MCF 10A (cell line): ENCODE measurements at regions of chr3 and their contacts with region 1.

Region 1: DNA sequence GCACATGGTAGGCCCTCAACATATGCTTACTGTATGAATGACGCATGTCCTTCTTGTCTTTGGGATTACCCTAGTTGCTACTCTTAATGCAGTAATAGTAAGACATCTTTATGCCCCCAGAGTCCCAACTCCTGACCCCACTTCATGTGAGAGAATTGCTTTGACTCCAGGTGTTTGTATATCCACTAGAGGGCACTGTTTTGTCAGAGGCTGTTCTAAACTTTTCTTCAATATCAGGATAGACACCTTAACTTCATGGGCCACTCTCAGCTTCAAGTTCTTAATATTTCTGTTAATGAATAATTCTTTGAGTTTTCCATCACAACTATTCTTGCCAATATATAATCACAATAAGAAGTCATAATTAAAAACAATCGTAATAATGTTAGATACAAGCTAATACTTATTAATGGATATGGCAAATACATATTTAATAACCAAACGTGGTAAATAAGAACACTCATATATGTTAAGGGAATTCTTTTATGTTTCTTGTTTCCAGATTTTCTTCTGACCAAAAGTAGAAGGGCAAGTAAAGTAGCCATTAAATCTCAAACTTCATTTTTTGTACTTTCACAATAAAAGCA is 337.2 kb upstream of the DNAJC19 start:
- DNase-seq: peak; percentile 46
- H3K4me3 Mint-ChIP-seq: no peak overlapping the region
- H3K27ac Mint-ChIP-seq: no peak overlapping the region
- H3K4me1 Mint-ChIP-seq: no peaks in the 10 kb centered on the region
- H3K27me3 Mint-ChIP-seq: peaks cover 18% of the 10 kb centered on the region
- CTCF ChIP-seq: peak; percentile 66

Region 2: DNA sequence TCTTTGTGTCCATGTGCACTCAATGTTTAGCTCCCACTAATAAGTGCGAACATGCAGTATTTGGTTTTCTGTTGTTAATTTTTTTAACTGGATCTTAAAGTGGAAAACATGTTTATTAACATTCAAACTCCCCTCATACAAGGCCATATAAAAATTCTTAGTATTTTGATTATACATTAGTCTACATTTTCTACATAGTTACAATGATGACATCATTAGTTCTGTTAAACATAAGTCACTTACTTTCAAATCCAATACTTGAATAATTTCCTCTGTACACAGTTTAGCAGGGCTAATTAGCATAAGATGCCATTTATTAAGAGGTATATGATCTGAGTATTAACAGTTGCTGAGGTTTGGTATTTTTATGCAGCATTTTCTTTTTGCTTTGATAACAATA is 556.1 kb before region 1 on chr3:
- CTCF ChIA-PET with region 1: no interaction called
- POLR2A ChIA-PET with region 1: no interaction called
- intact Hi-C with region 1: no loop called
- DNase-seq: no peak
- H3K4me3 Mint-ChIP-seq: no peak overlapping the region
- H3K27ac Mint-ChIP-seq: no peak overlapping the region
- H3K4me1 Mint-ChIP-seq: no peaks in the 10 kb centered on the region
- H3K27me3 Mint-ChIP-seq: no peaks in the 10 kb centered on the region
- CTCF ChIP-seq: no peak

Region 3: DNA sequence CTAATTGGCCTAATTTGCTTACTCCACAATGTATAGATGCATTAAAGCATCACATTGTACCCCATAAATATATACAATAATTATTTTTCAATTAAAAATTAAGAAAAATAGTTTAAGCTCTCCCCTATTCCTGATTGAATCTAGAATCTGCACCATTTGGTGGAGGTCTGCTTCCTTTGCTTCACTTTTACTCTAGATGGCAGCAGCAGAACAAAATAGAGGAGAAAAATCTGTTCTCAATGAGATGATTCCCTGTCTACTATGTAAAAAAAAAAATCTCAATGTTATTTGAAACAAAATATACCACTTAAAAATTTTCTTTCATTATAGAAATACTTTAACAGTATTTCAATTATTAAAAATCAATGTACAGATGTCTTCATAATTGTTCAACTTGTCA is 523.9 kb before region 1 on chr3:
- CTCF ChIA-PET with region 1: no interaction called
- POLR2A ChIA-PET with region 1: no interaction called
- intact Hi-C with region 1: loop called (anchors 5 kb)
- DNase-seq: peak; percentile 46
- H3K4me3 Mint-ChIP-seq: no peak overlapping the region
- H3K27ac Mint-ChIP-seq: no peak overlapping the region
- H3K4me1 Mint-ChIP-seq: no peaks in the 10 kb centered on the region
- H3K27me3 Mint-ChIP-seq: no peaks in the 10 kb centered on the region
- CTCF ChIP-seq: peak; percentile 48

Region 4: GRCh38 chr3:181276358-181276896 is 50.3 kb before region 1 on chr3:
- CTCF ChIA-PET with region 1: no interaction called
- POLR2A ChIA-PET with region 1: no interaction called
- intact Hi-C with region 1: no loop called
- DNase-seq: no peak
- H3K4me3 Mint-ChIP-seq: no peak overlapping the region
- H3K27ac Mint-ChIP-seq: no peak overlapping the region
- H3K4me1 Mint-ChIP-seq: no peaks in the 10 kb centered on the region
- H3K27me3 Mint-ChIP-seq: peaks cover 48% of the 10 kb centered on the region
- CTCF ChIP-seq: no peak

Region 5: GRCh38 chr3:181288145-181288544 is 38.6 kb before region 1 on chr3:
- CTCF ChIA-PET with region 1: no interaction called
- POLR2A ChIA-PET with region 1: no interaction called
- intact Hi-C with region 1: no loop called
- DNase-seq: no peak
- H3K4me3 Mint-ChIP-seq: no peak overlapping the region
- H3K27ac Mint-ChIP-seq: no peak overlapping the region
- H3K4me1 Mint-ChIP-seq: no peaks in the 10 kb centered on the region
- H3K27me3 Mint-ChIP-seq: peaks cover 1% of the 10 kb centered on the region
- CTCF ChIP-seq: no peak

Region 6: GRCh38 chr3:181311186-181311585 is 15.5 kb before region 1 on chr3:
- CTCF ChIA-PET with region 1: interaction called, 23 read pairs
- POLR2A ChIA-PET with region 1: no interaction called
- intact Hi-C with region 1: no loop called
- DNase-seq: no peak
- H3K4me3 Mint-ChIP-seq: no peak overlapping the region
- H3K27ac Mint-ChIP-seq: no peak overlapping the region
- H3K4me1 Mint-ChIP-seq: no peaks in the 10 kb centered on the region
- H3K27me3 Mint-ChIP-seq: peaks cover 48% of the 10 kb centered on the region
- CTCF ChIP-seq: no peak

Region 7: DNA sequence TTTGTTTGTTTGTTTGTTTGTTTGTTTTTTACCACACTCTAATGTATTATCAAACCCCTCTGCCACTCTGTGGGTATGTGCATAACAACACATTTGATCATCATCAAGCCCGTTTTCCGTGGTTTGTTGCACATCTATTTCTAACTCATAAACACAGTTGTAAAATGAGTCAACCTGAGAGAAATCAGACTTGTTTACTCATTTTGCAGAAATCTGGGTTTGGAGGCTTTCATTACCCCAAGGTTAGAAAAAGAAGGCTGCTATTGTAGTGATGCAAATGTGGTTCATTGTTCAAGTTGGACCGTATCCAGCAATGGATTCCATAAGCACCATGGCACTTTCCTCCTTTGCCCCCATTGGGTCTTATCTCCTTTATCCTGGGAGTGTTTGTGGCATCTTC is 31.8 kb after region 1 on chr3:
- CTCF ChIA-PET with region 1: interaction called, 15 read pairs
- POLR2A ChIA-PET with region 1: no interaction called
- intact Hi-C with region 1: no loop called
- DNase-seq: no peak
- H3K4me3 Mint-ChIP-seq: no peak overlapping the region
- H3K27ac Mint-ChIP-seq: no peak overlapping the region
- H3K4me1 Mint-ChIP-seq: peaks cover 20% of the 10 kb centered on the region
- H3K27me3 Mint-ChIP-seq: peaks cover 10% of the 10 kb centered on the region
- CTCF ChIP-seq: no peak

Region 8: DNA sequence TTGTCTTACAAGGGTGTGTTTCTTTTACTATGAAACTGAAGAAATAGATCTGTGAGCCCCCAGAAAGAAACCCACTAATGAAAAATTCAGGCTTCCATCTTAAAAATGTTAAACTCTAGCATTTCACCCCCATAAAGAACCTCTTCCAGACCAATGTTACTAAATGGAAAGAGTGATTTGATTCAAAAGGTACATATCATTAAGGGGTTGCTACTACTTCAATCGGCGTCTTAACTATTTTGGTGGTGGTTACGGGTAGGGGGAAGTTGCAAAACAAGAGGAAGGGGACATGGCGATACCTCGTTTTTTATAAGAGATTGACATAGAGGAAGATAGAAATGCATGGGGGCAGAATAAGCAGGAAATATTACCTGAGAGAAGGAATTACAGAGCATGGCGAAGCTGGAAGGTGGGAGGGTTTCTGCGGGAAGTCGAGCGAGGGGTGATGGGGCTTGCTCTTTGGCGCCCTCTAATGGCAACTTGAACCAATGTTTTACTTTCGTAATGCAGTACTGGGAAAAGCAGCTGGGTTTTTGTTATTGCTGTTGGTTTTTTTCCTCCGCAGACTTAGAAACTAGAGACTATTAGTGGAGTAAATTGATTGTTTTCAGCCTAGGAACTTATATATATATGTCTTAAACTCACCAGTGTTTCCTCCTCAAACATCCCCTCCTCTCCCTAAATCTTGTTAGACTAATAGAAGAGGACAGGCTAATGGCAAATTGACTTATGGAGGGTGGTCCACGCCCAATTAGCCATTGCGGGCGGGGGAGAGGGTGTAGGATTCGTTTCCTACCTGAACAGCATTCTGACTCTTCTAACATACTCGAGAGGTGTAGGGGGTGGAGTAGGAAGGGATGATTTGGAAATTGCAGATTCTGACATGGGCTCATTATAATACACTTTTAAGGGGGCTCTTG is 373.7 kb after region 1 on chr3:
- CTCF ChIA-PET with region 1: interaction called, 164 read pairs
- POLR2A ChIA-PET with region 1: interaction called, 6 read pairs
- intact Hi-C with region 1: loop called (anchors 1 kb)
- DNase-seq: peak; percentile 84
- H3K4me3 Mint-ChIP-seq: peak overlapping the region; percentile 60
- H3K27ac Mint-ChIP-seq: peak overlapping the region; percentile 65
- H3K4me1 Mint-ChIP-seq: peaks cover 16% of the 10 kb centered on the region
- H3K27me3 Mint-ChIP-seq: no peaks in the 10 kb centered on the region
- CTCF ChIP-seq: peak; percentile 87

Region 9: DNA sequence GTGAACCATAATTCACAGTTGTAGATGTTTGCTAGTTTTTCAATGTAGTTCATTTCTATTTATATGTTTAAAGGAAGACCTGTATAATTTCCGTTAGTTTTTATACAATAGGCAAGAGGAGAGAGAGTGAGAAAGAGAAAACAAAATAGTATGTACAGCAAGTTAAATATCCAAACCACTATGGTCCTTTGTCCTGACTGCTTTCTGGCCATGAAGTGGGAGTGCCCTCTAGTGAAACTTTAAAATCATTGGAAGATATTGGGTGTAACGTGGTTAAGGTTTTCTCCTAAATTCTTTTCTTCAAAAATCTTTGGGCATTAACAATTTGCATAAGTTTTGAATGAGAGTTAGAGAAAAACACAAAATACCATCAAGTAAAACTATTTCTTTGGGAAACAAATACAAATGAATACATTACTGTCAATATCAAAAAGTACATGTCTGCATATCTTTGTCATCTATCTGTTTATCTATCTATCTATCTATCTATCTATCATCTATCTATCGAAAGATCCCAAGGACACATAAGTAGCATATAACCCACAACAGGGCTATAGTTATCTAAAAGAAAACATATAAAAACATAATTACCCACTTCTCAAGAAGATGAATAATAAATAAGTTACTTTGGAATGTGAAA is 931.9 kb after region 1 on chr3:
- CTCF ChIA-PET with region 1: interaction called, 3 read pairs
- POLR2A ChIA-PET with region 1: no interaction called
- intact Hi-C with region 1: loop called (anchors 10 kb)
- DNase-seq: peak; percentile 55
- H3K4me3 Mint-ChIP-seq: no peak overlapping the region
- H3K27ac Mint-ChIP-seq: peak overlapping the region; percentile 62
- H3K4me1 Mint-ChIP-seq: peaks cover 5% of the 10 kb centered on the region
- H3K27me3 Mint-ChIP-seq: no peaks in the 10 kb centered on the region
- CTCF ChIP-seq: peak; percentile 78

Region 10: DNA sequence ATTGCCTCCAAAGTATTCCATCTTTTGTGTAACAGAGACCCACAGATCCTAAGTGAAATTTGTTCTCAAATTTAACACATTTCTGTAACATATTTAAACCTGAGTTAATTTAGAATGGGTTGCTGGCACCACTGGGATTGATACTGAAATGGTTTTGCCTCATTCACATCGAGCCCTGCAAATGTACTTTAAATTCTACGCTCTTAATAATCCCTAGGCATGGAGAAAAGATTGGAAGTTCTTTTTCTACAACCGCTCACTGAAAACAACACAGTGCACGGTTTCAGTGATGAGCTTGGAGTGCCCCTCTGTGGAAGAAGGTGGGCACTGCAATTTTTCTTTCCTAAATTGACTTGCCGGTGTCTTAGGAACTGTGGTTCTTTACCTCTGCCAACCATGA is 1356.7 kb after region 1 on chr3:
- CTCF ChIA-PET with region 1: interaction called, 3 read pairs
- POLR2A ChIA-PET with region 1: no interaction called
- intact Hi-C with region 1: loop called (anchors 1 kb)
- DNase-seq: peak; percentile 78
- H3K4me3 Mint-ChIP-seq: peak overlapping the region; percentile 46
- H3K27ac Mint-ChIP-seq: peak overlapping the region; percentile 21
- H3K4me1 Mint-ChIP-seq: peaks cover 10% of the 10 kb centered on the region
- H3K27me3 Mint-ChIP-seq: no peaks in the 10 kb centered on the region
- CTCF ChIP-seq: peak; percentile 94